ENCODE measurements at regions of chr7 and their contacts with region 1.

Region 1: GRCh38 chr7:100148559-100149350 is at the start of gene LAMTOR4:
- H3K4me3 Mint-ChIP-seq: peak within 1 kb of the TSS; percentile 99
- H3K27ac Mint-ChIP-seq: peak within 1 kb of the TSS; percentile 98
- H3K4me1 Mint-ChIP-seq: peaks cover 51% of the 10 kb centered on the region
- H3K27me3 Mint-ChIP-seq: no peaks in the 10 kb centered on the region

Region 2: GRCh38 chr7:100177045-100178001 is 28.6 kb after region 1 on chr7 and contains the starts of genes GPC2 and STAG3:
- intact Hi-C with region 1: loop called (anchors 1 kb)
- H3K4me3 Mint-ChIP-seq: peak within 1 kb of the TSS; percentile 68
- H3K27ac Mint-ChIP-seq: peak within 1 kb of the TSS; percentile 60
- H3K4me1 Mint-ChIP-seq: peaks cover 26% of the 10 kb centered on the region
- H3K27me3 Mint-ChIP-seq: peaks cover 74% of the 10 kb centered on the region